Activated CD4-positive, alpha-beta T cell treated with anti-CD3 and anti-CD28 coated beads for 36 hours (primary cell): ENCODE measurements at regions of chr11 and their contacts with region 1.

Region 1: DNA sequence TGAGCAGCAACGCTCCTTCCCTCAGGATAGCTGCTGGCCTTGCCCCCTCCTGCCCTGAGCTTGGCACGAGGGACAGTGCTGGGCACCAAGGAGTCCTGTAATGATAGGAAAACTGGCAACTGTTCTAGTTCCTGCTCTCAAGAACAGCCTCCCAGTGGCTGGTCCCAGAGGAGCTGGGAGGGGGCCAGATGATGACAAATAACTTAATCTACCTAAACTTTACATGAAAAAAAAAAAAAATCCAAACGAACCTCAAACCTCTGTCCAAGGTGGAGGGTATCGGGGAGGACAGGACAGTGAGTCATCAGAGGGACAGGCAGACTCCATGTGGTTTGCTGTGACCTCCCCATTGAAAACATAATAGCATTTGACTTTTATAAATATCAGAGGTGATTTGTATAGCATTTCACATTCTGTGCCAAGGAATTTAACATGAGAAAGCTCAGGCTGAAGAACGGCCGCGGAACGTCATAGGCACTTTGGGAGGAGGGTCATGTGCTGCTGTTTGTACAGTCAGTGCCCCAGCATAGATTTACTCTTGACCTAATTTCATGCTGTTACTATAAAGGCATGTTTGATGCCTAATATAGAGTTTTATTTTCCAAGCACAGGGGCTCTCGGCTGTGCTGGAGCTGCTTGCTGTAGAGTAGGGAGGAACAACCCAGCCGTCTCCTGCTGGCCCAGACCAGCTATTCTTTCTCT is 98.2 kb upstream of the NNMT start:
- DNase-seq: no peak
- ATAC-seq: no peak
- H3K4me3 Mint-ChIP-seq: no peak overlapping the region
- H3K27ac Mint-ChIP-seq: no peak overlapping the region
- H3K4me1 Mint-ChIP-seq: peaks cover 12% of the 10 kb centered on the region
- H3K27me3 Mint-ChIP-seq: no peaks in the 10 kb centered on the region

Region 2: GRCh38 chr11:113994077-113994954 is 203.6 kb before region 1 on chr11:
- CTCF ChIA-PET with region 1: interaction called, 3 read pairs
- POLR2A ChIA-PET with region 1: no interaction called
- intact Hi-C with region 1: loop called in 1 of 2 experiments (anchors 5 kb)
- DNase-seq: peak; percentile 51
- ATAC-seq: peak; percentile 51
- H3K4me3 Mint-ChIP-seq: no peak overlapping the region
- H3K27ac Mint-ChIP-seq: no peak overlapping the region
- H3K4me1 Mint-ChIP-seq: no peaks in the 10 kb centered on the region
- H3K27me3 Mint-ChIP-seq: peaks cover 14% of the 10 kb centered on the region

Region 3: DNA sequence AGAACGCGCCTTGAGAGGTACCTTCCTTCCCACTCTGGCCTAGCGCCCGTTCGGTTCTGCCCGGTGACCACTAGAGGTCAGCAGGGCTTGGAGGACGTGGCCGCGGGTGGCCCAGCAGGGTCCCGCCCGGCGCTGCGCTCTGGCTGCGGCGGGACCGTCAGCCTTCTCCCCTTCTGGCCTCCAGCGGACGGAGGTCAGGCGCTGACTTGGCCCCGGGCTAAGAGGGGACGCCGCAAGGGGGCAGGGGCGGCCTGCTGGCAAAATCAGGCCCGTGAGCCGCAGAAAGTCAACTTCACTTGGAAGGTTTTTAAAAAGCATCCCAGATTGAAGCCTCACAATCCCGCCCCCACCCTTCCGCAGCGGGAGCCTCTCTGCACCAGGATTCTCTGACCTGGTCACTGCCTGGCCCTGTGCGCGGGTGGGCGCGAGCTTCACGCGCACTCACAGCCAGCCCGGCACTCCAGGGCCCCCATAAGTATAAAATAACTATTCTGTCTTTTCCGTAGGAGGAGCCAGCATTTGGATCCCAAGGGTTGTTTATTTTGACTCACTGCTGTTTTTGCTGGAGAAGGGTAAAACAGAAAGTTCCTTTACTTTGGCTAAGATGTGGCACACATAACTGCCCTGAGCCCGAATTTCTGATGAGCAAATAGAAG is 161.7 kb before region 1 on chr11:
- CTCF ChIA-PET with region 1: interaction called, 4 read pairs
- POLR2A ChIA-PET with region 1: no interaction called
- intact Hi-C with region 1: loop called in 1 of 2 experiments (anchors 2 kb)
- DNase-seq: peak; percentile 73
- ATAC-seq: peak; percentile 88
- H3K4me3 Mint-ChIP-seq: no peak overlapping the region
- H3K27ac Mint-ChIP-seq: no peak overlapping the region
- H3K4me1 Mint-ChIP-seq: no peaks in the 10 kb centered on the region
- H3K27me3 Mint-ChIP-seq: peaks cover 7% of the 10 kb centered on the region

Region 4: GRCh38 chr11:114099392-114100178 is 98.4 kb before region 1 on chr11:
- CTCF ChIA-PET with region 1: no interaction called
- POLR2A ChIA-PET with region 1: no interaction called
- intact Hi-C with region 1: no loop called
- DNase-seq: no peak
- ATAC-seq: peak; percentile 82
- H3K4me3 Mint-ChIP-seq: no peak overlapping the region
- H3K27ac Mint-ChIP-seq: no peak overlapping the region
- H3K4me1 Mint-ChIP-seq: peaks cover 32% of the 10 kb centered on the region
- H3K27me3 Mint-ChIP-seq: no peaks in the 10 kb centered on the region

Region 5: GRCh38 chr11:114472661-114473060 is 274.7 kb after region 1 on chr11:
- CTCF ChIA-PET with region 1: no interaction called
- POLR2A ChIA-PET with region 1: interaction called, 11 read pairs
- intact Hi-C with region 1: no loop called
- DNase-seq: no peak
- ATAC-seq: no peak
- H3K4me3 Mint-ChIP-seq: no peak overlapping the region
- H3K27ac Mint-ChIP-seq: no peak overlapping the region
- H3K4me1 Mint-ChIP-seq: no peaks in the 10 kb centered on the region
- H3K27me3 Mint-ChIP-seq: peaks cover 4% of the 10 kb centered on the region